ENCODE measurements at regions of chr4 and their contacts with region 1.

Region 1: DNA sequence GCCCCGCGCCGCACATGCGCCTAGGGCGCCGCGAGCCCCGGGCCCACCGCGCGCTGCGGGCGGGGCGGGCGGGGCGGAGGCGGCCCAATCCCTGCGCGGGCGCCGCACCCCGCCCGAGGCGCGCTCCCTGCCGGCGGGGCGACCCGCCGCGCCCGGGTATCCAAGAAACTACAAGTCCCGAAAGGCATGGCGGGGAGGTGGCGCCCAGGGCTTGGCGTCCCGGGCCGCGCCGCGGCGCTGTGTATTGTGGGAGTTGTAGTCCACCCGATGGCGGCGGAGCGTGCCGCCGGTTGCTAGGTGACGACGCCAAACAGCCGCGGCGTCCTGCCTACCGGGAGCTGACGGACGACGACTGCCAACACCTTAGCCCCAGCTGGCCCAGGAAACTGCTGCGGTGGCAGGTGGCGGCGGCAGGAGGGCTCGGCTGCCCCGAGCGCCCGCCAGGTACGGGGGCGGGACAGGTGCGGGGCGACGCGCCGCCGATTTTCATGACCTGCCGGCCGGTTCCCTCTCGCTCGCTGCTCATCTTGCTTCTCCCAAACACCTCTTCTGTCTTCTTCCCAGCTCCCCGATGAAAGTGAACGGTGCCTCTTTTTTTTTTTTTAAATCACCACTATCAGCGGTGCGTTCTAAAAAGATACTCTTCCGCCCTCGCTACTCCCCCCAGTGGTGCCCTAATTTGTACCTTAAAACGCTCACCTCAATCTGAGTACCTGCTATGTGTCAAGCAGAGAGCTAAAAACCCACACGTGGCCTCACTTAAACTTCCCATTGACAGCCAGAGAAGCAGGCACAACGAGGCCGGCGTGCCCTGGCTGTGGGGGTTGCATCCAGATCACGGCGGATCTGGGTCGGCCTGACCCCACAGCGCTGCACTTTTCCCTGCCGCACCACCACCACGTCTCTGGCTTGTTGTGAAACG is at the start of gene CFAP99:
- DNase-seq: peak; percentile 97 to 99 (median 98)
- ATAC-seq: peak; percentile 95 to 98 (median 96)
- H3K4me3 ChIP-seq: peak within 1 kb of the TSS; percentile 48 to 84 (median 70)
- H3K27ac ChIP-seq: peak within 1 kb of the TSS in 7 of 12 donors; percentile 15 to 39 (median 24)
- H3K4me1 ChIP-seq: peaks cover 5 to 42% (median 22%) of the 10 kb centered on the region in 12 donors
- H3K27me3 ChIP-seq: peaks cover 0 to 41% (median 16%) of the 10 kb centered on the region in 9 donors
- CTCF ChIP-seq: peak in 7 of 12 donors; percentile 6 to 45 (median 23)
- POLR2A ChIP-seq: peak in 1 of 2 donors; percentile 3
- total RNA-seq, gene CFAP99: not detected

Region 2: GRCh38 chr4:2255501-2256155 is 163.3 kb before region 1 on chr4:
- intact Hi-C with region 1: loop called in 8 of 10 experiments (anchors 5 to 10 kb)
- DNase-seq: peak; percentile 39 to 68 (median 45)
- ATAC-seq: peak in 3 of 4 donors; percentile 3 to 34 (median 18)
- H3K4me3 ChIP-seq: peak overlapping the region in 7 of 12 donors; percentile 8 to 32 (median 21)
- H3K27ac ChIP-seq: peak overlapping the region; percentile 74 to 94 (median 89)
- H3K4me1 ChIP-seq: peaks cover 21 to 78% (median 68%) of the 10 kb centered on the region in 12 donors
- H3K27me3 ChIP-seq: no peaks in the 10 kb centered on the region
- CTCF ChIP-seq: peak in 2 of 12 donors; percentile 5 to 6
- POLR2A ChIP-seq: no peak

Region 3: DNA sequence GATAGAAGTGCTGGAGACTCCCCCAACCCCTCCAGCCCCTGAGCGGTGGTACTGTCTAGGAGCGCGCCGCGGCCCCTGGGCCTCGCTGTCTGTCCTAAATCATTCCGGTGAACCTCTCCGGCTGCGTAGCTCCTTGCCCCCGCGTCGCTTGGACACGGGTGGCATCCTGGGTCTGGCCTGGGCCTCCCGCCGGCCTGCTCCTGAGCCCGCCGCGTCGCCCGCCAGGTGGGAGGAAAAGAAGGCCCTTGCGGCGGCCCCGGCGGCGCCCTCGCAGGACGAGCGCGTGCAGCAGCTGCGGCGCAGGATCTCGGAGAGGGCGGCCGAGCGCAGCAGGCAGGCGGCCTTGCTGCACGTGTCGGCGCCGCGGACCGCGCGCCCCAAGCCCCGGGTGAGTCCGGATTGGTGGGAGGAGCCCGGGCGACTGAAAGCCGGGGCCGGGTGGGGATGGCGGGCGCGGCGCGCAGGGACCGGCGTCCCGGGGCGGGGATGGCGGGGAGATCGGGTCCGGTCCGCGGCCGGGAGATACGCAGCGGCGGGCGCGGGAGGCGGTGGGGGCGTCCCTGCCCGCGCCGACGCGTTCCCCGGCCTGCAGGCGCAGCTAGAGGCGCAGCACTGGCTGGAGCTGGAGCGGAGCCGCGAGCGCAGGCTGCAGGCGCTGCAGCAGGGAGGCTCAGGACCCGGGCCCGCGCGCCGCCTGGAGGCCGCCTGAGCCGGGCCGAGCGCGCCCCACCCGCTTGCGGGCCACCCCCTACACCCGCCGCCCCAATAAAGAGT is 43.5 kb after region 1 on chr4:
- intact Hi-C with region 1: no loop called
- DNase-seq: peak; percentile 67 to 84 (median 73)
- ATAC-seq: peak; percentile 68 to 96 (median 90)
- H3K4me3 ChIP-seq: peak overlapping the region; percentile 35 to 80 (median 60)
- H3K27ac ChIP-seq: peak overlapping the region in 9 of 12 donors; percentile 6 to 78 (median 62)
- H3K4me1 ChIP-seq: peaks cover 0 to 18% (median 11%) of the 10 kb centered on the region in 12 donors
- H3K27me3 ChIP-seq: peaks cover 0 to 12% (median 0%) of the 10 kb centered on the region in 9 donors
- CTCF ChIP-seq: peak in 11 of 12 donors; percentile 33 to 79 (median 66)
- POLR2A ChIP-seq: no peak

Measured in heart left ventricle (tissue), 16 donors.